ENCODE measurements at regions of chr19 and their contacts with region 1.

Region 1: GRCh38 chr19:21256722-21257121 is 72.5 kb downstream of the ZNF708 start:
- DNase-seq: no peak
- H3K4me3 ChIP-seq: no peak overlapping the region
- H3K27me3 ChIP-seq: no peaks in the 10 kb centered on the region
- CTCF ChIP-seq: peak; percentile 29

Region 2: GRCh38 chr19:21202865-21203494 is 53.7 kb before region 1 on chr19:
- CTCF ChIA-PET with region 1: interaction called, 19 read pairs
- POLR2A ChIA-PET with region 1: no interaction called
- DNase-seq: no peak
- H3K4me3 ChIP-seq: no peak overlapping the region
- H3K27me3 ChIP-seq: no peaks in the 10 kb centered on the region
- CTCF ChIP-seq: peak; percentile 56

Region 3: DNA sequence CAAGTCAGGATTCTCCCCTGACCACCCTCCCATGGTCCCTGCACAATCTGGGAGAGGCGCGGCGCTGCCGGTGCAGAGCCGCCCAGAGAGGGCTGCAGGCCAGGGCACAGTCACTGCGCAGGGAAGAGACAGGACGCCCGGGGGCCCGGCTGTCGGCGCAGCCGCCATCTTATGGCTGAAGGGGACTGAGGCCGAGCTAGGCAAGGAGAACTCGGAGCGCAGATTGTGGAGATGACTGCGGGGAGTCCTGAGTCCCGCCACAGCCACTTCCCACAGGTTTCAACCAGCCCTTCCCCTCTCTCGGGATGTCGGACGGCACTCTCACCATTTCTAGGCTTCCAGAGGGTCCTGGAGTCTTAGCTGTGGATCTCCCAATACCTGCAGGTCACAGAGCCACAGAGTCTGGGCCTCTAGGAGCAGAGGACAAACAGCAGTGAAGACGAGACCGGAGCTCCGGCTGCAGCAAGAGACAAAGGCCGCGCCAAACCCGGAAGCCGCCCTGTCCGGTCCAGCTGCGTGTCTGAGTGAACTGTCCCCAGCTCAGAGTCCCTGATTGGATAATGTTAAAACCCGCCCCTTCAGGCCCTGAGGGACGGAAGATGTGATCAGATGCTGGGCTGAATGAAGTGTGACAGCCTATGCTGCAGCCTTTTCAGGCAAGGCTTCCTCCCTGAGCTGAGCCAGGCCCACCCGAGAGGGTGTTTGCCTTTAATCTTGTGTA is 72.3 kb after region 1 on chr19 and contains the start of gene ZNF708:
- CTCF ChIA-PET with region 1: no interaction called
- POLR2A ChIA-PET with region 1: no interaction called
- DNase-seq: peak; percentile 56
- H3K4me3 ChIP-seq: peak within 1 kb of the TSS; percentile 81
- H3K27me3 ChIP-seq: no peaks in the 10 kb centered on the region
- CTCF ChIP-seq: no peak
- polyA plus RNA-seq, gene ZNF708: 1.8 and 2.1 TPM in 2 replicates

Measured in BJ (cell line).